GM12878 (cell line): ENCODE measurements at regions of chr2 and their contacts with region 1.

Region 1: DNA sequence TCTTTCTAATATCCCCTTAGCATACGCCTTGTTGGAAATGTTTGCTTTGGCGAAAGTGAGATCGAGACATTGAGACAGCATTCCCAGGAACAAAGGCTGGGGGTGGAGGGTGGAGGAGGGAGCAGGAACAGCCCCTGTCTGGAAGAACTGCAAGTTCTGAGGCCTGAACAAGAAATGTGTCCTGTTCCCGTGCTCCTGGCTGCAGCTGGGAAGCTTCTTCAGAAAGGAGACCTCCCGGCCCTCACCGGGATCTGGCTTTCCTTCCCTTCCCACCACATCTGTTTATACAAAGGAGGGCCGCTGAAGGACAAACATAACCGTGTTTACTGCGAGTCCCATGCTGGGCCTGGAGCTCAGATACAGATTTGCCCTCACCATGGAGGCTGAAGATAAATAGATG is 35.9 kb downstream of the AFF3 start:
- DNase-seq: no peak
- ATAC-seq: no peak
- H3K4me3 ChIP-seq: no peak overlapping the region
- H3K27ac ChIP-seq: no peak overlapping the region
- H3K4me1 ChIP-seq: no peaks in the 10 kb centered on the region
- H3K27me3 ChIP-seq: peaks cover 2 to 9% of the 10 kb centered on the region in 2 experiments
- CTCF ChIP-seq: no peak
- EP300 ChIP-seq: no peak
- POLR2A ChIP-seq: no peak
- RAD21 ChIP-seq: no peak

Region 2: GRCh38 chr2:100126201-100126600 is 19.7 kb after region 1 on chr2:
- CTCF ChIA-PET with region 1: no interaction called
- POLR2A ChIA-PET with region 1: no interaction called
- RAD21 ChIA-PET with region 1: no interaction called
- SMC1A ChIA-PET with region 1: no interaction called
- in situ Hi-C with region 1: no loop called
- intact Hi-C with region 1: loop called (anchors 2 kb)
- DNase-seq: no peak
- ATAC-seq: no peak
- H3K4me3 ChIP-seq: no peak overlapping the region
- H3K27ac ChIP-seq: no peak overlapping the region
- H3K4me1 ChIP-seq: peaks cover 5% of the 10 kb centered on the region
- H3K27me3 ChIP-seq: no peaks in the 10 kb centered on the region; a peak in 2 of 4 replicates
- CTCF ChIP-seq: no peak
- EP300 ChIP-seq: no peak
- POLR2A ChIP-seq: no peak
- RAD21 ChIP-seq: no peak

Region 3: DNA sequence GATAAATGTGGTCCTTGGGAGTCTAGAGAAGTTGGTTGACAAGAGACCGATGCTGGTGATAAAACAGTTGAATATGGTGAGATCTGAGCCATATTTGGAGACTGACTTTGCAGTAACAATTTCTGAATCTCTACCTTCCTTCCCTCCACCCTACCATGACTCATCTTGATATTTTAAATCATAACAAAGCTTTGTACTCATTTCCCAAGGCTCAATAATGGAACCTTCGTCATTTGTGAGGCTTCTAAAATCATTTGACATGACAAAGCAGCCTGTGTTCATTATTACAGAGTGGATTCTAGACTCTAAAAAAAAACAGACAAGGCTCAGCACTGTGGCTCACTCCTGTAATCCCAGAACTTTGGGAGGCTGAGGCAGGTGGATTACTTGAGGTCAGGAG is 417.9 kb after region 1 on chr2:
- CTCF ChIA-PET with region 1: no interaction called
- POLR2A ChIA-PET with region 1: no interaction called
- RAD21 ChIA-PET with region 1: no interaction called
- SMC1A ChIA-PET with region 1: no interaction called
- in situ Hi-C with region 1: no loop called
- intact Hi-C with region 1: no loop called
- DNase-seq: no peak
- ATAC-seq: no peak
- H3K4me3 ChIP-seq: no peak overlapping the region
- H3K27ac ChIP-seq: no peak overlapping the region
- H3K4me1 ChIP-seq: no peaks in the 10 kb centered on the region
- H3K27me3 ChIP-seq: peaks cover 0 to 2% of the 10 kb centered on the region in 2 experiments; a peak in 1 of 4 replicates
- CTCF ChIP-seq: no peak
- EP300 ChIP-seq: no peak
- POLR2A ChIP-seq: no peak
- RAD21 ChIP-seq: no peak